MCF 10A (cell line): ENCODE measurements at regions of chr11 and their contacts with region 1.

Region 1: GRCh38 chr11:27472398-27473016 is at the start of gene LGR4:
- DNase-seq: peak; percentile 98
- H3K4me3 Mint-ChIP-seq: peak within 1 kb of the TSS; percentile 79
- H3K27ac Mint-ChIP-seq: peak within 1 kb of the TSS; percentile 79
- H3K4me1 Mint-ChIP-seq: peaks cover 31% of the 10 kb centered on the region
- H3K27me3 Mint-ChIP-seq: no peaks in the 10 kb centered on the region
- CTCF ChIP-seq: no peak
- total RNA-seq, gene LGR4: 14.2 and 14.8 TPM in 2 replicates

Region 2: DNA sequence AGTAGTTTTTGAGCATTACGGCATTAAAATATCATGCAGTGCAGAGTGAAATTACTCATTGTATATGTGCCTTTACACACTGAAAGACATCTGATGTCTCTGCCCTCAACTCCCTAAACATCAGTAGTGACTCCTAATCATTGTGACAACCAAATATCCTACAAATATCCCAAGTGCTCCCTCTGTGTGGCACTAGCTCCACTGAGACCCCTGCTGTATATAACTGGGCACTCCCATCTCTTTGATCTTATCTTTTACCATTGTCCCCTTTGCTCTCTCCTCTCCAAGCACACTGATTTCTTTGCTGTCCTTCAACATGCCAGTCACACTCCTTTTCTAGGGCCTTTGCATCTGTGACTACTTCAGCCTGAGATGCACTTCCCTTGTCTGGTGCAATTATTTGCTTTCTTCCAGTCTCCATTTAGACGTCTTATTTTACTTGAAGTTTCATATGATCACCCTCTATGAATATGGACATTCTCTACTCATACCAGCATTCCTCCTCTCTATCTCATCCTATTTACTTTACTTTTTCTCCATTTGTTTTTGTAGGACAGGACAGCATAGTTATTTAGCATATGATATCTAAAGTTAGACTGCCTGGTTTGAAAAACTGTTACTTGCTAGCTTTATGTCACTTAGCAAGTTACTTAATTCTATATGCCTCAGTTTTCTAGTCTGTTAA is 753.1 kb before region 1 on chr11:
- CTCF ChIA-PET with region 1: no interaction called
- POLR2A ChIA-PET with region 1: no interaction called
- intact Hi-C with region 1: no loop called
- DNase-seq: no peak
- H3K4me3 Mint-ChIP-seq: no peak overlapping the region
- H3K27ac Mint-ChIP-seq: no peak overlapping the region
- H3K4me1 Mint-ChIP-seq: peaks cover 7% of the 10 kb centered on the region
- H3K27me3 Mint-ChIP-seq: no peaks in the 10 kb centered on the region
- CTCF ChIP-seq: no peak

Region 3: DNA sequence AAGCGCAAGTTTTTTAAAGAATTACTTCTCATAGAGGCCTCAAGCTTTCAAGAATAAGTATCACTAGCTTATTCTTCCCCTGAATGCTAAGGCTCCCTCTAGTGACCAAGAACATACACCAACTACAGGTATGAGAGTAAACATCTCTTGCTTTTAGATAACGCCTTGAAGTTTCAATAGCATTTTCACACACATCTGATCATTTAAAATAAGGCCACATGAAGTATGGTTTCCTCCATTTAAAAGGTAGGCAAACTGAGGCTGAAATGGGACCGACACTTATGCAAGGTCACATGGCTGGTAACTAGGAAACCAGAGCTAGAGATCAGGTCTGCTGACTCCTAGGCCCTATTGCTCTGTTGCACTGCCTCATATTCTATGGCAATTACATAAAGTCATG is 176.0 kb before region 1 on chr11:
- CTCF ChIA-PET with region 1: interaction called, 4 read pairs
- POLR2A ChIA-PET with region 1: no interaction called
- intact Hi-C with region 1: loop called (anchors 5 kb)
- DNase-seq: peak; percentile 69
- H3K4me3 Mint-ChIP-seq: no peak overlapping the region
- H3K27ac Mint-ChIP-seq: no peak overlapping the region
- H3K4me1 Mint-ChIP-seq: peaks cover 3% of the 10 kb centered on the region
- H3K27me3 Mint-ChIP-seq: no peaks in the 10 kb centered on the region
- CTCF ChIP-seq: peak; percentile 56

Region 4: DNA sequence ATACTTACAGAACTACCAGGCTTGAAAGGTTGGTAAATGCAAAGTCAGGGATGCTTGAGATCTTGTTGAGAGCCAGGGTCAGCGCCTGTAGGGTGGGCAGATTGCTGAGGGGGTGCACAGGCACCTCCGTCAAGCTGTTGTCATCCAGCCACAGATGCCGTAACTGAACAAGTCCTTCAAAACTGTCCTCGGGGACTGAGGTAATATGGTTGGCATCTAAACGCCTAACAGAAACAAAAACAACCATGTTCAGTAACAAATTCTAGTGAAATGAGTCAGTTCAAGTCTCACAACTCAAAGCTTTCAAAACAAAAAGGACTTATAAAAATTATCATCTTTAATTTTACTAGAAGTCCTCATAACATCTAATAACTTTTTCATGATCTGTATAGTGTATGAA is 87.3 kb before region 1 on chr11:
- CTCF ChIA-PET with region 1: interaction called, 3 read pairs
- POLR2A ChIA-PET with region 1: interaction called, 12 read pairs
- intact Hi-C with region 1: loop called (anchors 2 kb)
- DNase-seq: peak; percentile 46
- H3K4me3 Mint-ChIP-seq: peak overlapping the region; percentile 38
- H3K27ac Mint-ChIP-seq: peak overlapping the region; percentile 75
- H3K4me1 Mint-ChIP-seq: peaks cover 9% of the 10 kb centered on the region
- H3K27me3 Mint-ChIP-seq: no peaks in the 10 kb centered on the region
- CTCF ChIP-seq: no peak

Region 5: DNA sequence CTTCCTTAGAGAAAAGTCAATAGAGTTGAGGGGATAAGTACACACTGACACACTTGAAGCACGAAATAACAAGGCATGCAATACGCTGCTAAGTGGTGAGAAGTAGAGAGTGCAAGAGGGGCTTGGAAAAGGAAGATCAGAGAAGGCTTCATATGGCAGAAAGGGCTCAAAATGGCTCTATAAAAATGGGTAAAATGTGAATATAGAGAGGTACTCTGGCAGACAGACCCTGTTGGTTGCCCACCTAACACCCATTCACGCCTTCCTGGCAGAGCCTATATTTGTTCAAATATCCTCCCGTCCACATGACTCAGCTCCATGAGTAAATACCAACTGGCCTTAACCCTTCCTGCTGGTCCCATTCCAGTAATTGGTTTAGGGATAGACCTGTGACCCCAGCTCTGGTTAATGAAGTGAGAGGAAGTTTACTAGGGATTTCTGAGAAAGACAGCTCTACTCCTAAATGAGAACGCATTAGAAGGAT is 70.6 kb before region 1 on chr11:
- CTCF ChIA-PET with region 1: interaction called, 3 read pairs
- POLR2A ChIA-PET with region 1: interaction called, 4 read pairs
- intact Hi-C with region 1: loop called (anchors 5 kb)
- DNase-seq: peak; percentile 46
- H3K4me3 Mint-ChIP-seq: no peak overlapping the region
- H3K27ac Mint-ChIP-seq: peak overlapping the region; percentile 83
- H3K4me1 Mint-ChIP-seq: peaks cover 27% of the 10 kb centered on the region
- H3K27me3 Mint-ChIP-seq: no peaks in the 10 kb centered on the region
- CTCF ChIP-seq: no peak

Region 6: DNA sequence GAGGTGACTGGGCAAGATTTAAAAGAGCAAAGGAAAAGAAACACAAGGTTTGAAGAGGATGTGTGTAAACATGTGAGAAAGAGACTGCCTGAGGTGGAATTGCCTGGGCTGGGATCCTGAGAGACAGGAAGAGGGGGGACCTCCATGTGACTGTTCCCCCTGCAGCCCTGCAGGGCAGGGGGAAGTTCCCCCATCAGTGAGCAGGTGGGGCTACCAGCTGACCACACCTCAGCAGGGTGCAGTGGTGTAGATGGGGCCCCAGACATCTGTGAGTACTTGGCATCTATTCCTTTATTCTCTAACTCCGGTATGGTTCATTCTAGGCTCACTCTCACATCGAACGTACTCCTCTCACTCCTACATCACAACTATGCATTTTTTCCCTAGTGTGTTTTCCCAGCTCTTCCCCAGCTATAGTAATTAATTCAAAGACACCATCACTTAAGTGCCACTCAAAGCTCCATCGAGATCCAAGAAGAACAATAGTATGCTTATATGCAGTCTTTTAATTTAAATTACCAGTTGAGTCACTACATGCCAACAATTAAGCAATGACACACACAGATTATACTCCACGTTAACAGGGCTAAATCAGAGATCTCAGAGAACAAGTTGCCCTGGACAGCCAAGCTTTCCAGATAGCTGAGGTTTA is 42.6 kb before region 1 on chr11:
- CTCF ChIA-PET with region 1: interaction called, 3 read pairs
- POLR2A ChIA-PET with region 1: interaction called, 17 read pairs
- intact Hi-C with region 1: loop called (anchors 2 kb)
- DNase-seq: peak; percentile 21
- H3K4me3 Mint-ChIP-seq: no peak overlapping the region
- H3K27ac Mint-ChIP-seq: no peak overlapping the region
- H3K4me1 Mint-ChIP-seq: peaks cover 14% of the 10 kb centered on the region
- H3K27me3 Mint-ChIP-seq: no peaks in the 10 kb centered on the region
- CTCF ChIP-seq: no peak

Region 7: GRCh38 chr11:27456140-27456794 is 16.2 kb before region 1 on chr11:
- CTCF ChIA-PET with region 1: no interaction called
- POLR2A ChIA-PET with region 1: interaction called, 32 read pairs
- intact Hi-C with region 1: no loop called
- DNase-seq: peak; percentile 56
- H3K4me3 Mint-ChIP-seq: peak overlapping the region; percentile 34
- H3K27ac Mint-ChIP-seq: peak overlapping the region; percentile 75
- H3K4me1 Mint-ChIP-seq: peaks cover 42% of the 10 kb centered on the region
- H3K27me3 Mint-ChIP-seq: no peaks in the 10 kb centered on the region
- CTCF ChIP-seq: no peak